Activated T-helper 1 cell treated with anti-CD3 and anti-CD28 coated beads, Interleukin-12 subunit alpha, Interleukin-12 subunit beta, Interleukin-2, Interleukin-4 antibody, amounts not matched to agents 30 ng/mL and 10 ng/mL and 1 ng/mL, durations not matched to agents 14 hours and 24 hours and 36 hours (primary cell): ENCODE measurements at regions of chr10 and their contacts with region 1.

Region 1: GRCh38 chr10:17228091-17228940 is at the start of gene VIM:
- DNase-seq: peak; percentile 81
- H3K4me3 Mint-ChIP-seq: peak within 1 kb of the TSS; percentile 92
- H3K27ac Mint-ChIP-seq: peak within 1 kb of the TSS; percentile 99
- H3K4me1 Mint-ChIP-seq: peaks cover 56% of the 10 kb centered on the region
- H3K27me3 Mint-ChIP-seq: peaks cover 2% of the 10 kb centered on the region
- total RNA-seq, gene VIM: 192 and 193 TPM in 2 replicates

Region 2: GRCh38 chr10:16195178-16195769 is 1033.0 kb before region 1 on chr10:
- intact Hi-C with region 1: loop called (anchors 5 kb)
- DNase-seq: peak; percentile 8
- H3K4me3 Mint-ChIP-seq: peak overlapping the region; percentile 16
- H3K27ac Mint-ChIP-seq: peak overlapping the region; percentile 3
- H3K4me1 Mint-ChIP-seq: peaks cover 31% of the 10 kb centered on the region
- H3K27me3 Mint-ChIP-seq: peaks cover 2% of the 10 kb centered on the region

Region 3: GRCh38 chr10:16817125-16818019 is 410.9 kb before region 1 on chr10 and contains the start of gene RSU1:
- intact Hi-C with region 1: loop called (anchors 1 kb)
- DNase-seq: peak; percentile 100
- H3K4me3 Mint-ChIP-seq: peak within 1 kb of the TSS; percentile 93
- H3K27ac Mint-ChIP-seq: peak within 1 kb of the TSS; percentile 91
- H3K4me1 Mint-ChIP-seq: peaks cover 42% of the 10 kb centered on the region
- H3K27me3 Mint-ChIP-seq: peaks cover 10% of the 10 kb centered on the region
- total RNA-seq, gene RSU1: 46.9 and 47.5 TPM in 2 replicates

Region 4: DNA sequence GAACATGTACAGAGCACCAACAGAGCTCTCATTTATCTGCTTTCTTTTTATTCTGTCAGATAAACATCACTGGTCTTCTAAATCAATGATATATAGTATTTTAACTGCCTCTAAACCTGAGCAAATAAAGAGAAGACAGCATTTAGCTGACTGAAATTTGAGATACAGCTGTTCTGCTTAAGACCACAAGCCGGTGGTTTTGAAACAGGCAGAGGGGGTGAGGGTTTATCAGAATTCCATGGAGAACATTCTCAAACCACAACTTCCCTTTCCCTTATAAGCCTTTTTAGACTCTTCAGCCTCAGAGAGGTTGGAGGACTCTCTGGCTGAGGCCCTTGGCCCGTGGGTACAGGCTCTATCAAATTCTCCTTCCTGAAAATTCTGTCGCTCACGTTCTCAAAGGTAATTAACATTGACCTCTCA is 323.7 kb before region 1 on chr10:
- intact Hi-C with region 1: loop called (anchors 1 kb)
- DNase-seq: no peak
- H3K4me3 Mint-ChIP-seq: no peak overlapping the region
- H3K27ac Mint-ChIP-seq: no peak overlapping the region
- H3K4me1 Mint-ChIP-seq: peaks cover 9% of the 10 kb centered on the region
- H3K27me3 Mint-ChIP-seq: peaks cover 7% of the 10 kb centered on the region

Region 5: GRCh38 chr10:17029581-17030271 is 198.6 kb before region 1 on chr10:
- intact Hi-C with region 1: loop called (anchors 1 kb)
- DNase-seq: peak; percentile 72
- H3K4me3 Mint-ChIP-seq: peak overlapping the region; percentile 73
- H3K27ac Mint-ChIP-seq: peak overlapping the region; percentile 73
- H3K4me1 Mint-ChIP-seq: peaks cover 80% of the 10 kb centered on the region
- H3K27me3 Mint-ChIP-seq: peaks cover 8% of the 10 kb centered on the region

Region 6: GRCh38 chr10:17075533-17076359 is 152.6 kb before region 1 on chr10:
- intact Hi-C with region 1: no loop called
- DNase-seq: no peak
- H3K4me3 Mint-ChIP-seq: no peak overlapping the region
- H3K27ac Mint-ChIP-seq: no peak overlapping the region
- H3K4me1 Mint-ChIP-seq: peaks cover 13% of the 10 kb centered on the region
- H3K27me3 Mint-ChIP-seq: peaks cover 9% of the 10 kb centered on the region

Region 7: GRCh38 chr10:17216217-17216900 is 12.0 kb before region 1 on chr10:
- intact Hi-C with region 1: loop called (anchors 1 kb)
- DNase-seq: peak; percentile 34
- H3K4me3 Mint-ChIP-seq: peak overlapping the region; percentile 45
- H3K27ac Mint-ChIP-seq: peak overlapping the region; percentile 98
- H3K4me1 Mint-ChIP-seq: peaks cover 51% of the 10 kb centered on the region
- H3K27me3 Mint-ChIP-seq: no peaks in the 10 kb centered on the region

Region 8: GRCh38 chr10:17643755-17644484 is 415.6 kb after region 1 on chr10 and contains the start of gene STAM:
- intact Hi-C with region 1: loop called (anchors 5 kb)
- DNase-seq: peak; percentile 87
- H3K4me3 Mint-ChIP-seq: peak within 1 kb of the TSS; percentile 99
- H3K27ac Mint-ChIP-seq: peak within 1 kb of the TSS; percentile 100
- H3K4me1 Mint-ChIP-seq: peaks cover 55% of the 10 kb centered on the region
- H3K27me3 Mint-ChIP-seq: no peaks in the 10 kb centered on the region
- total RNA-seq, gene STAM: 23.3 and 26.8 TPM in 2 replicates